ENCODE measurements at regions of chr17 and their contacts with region 1.

Region 1: DNA sequence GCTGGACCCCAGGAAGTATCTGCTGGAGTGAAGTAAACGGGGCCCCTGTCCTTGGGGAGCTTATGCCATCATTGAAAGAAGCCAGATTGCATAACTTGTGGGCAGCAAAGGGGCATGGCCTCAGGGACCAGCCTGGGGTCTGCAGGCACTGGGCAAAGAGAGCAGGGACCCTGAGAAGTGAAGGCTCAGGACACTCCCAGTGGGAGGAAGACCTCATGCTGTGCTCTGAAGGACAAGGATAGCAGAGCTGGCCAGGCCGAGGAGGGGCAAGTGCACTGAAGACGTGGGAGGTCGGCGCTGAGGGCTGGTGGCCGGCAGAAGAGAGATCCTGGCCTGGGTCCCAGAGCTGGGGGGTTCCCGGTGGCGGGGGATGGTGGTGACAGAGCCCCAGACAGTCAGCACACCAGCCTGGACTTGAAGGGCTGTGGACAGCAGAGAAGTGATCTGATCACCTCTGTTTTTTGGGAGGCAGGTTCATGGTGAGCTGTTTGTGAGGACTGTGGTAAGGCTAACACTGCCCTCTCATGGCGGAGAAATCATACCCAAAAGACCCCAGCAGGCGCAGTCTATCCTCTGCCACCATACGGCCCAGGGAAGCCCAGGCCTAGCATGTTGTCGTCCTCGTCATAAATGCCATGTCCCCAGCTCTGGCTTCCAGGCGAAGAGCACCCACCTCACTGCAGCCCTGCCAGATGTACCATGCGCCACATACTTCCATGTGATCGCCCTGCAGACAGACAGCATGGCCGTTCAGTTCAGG is 7.1 kb upstream of the CNP start:
- DNase-seq: peak; percentile 58 to 80 (median 69)
- ATAC-seq: peak; percentile 88
- H3K4me3 ChIP-seq: no peak overlapping the region
- H3K27ac ChIP-seq: peak overlapping the region; percentile 28; the same call in 1 of the 3 replicates
- H3K4me1 ChIP-seq: peaks cover 23 to 29% of the 10 kb centered on the region in 2 experiments
- H3K27me3 ChIP-seq: no peaks in the 10 kb centered on the region
- CTCF ChIP-seq: peak; percentile 79 to 88 (median 83)
- EP300 ChIP-seq: no peak
- POLR2A ChIP-seq: no peak
- RAD21 ChIP-seq: peak; percentile 65 to 86

Region 2: GRCh38 chr17:41588126-41588810 is 371.2 kb before region 1 on chr17:
- CTCF ChIA-PET with region 1: no interaction called
- POLR2A ChIA-PET with region 1: no interaction called
- in situ Hi-C with region 1: no loop called
- intact Hi-C with region 1: no loop called
- DNase-seq: no peak
- ATAC-seq: no peak
- H3K4me3 ChIP-seq: no peak overlapping the region
- H3K27ac ChIP-seq: no peak overlapping the region
- H3K4me1 ChIP-seq: no peaks in the 10 kb centered on the region; a peak in 2 of 5 replicates
- H3K27me3 ChIP-seq: peaks cover 32 to 81% of the 10 kb centered on the region in 2 experiments
- CTCF ChIP-seq: no peak
- EP300 ChIP-seq: no peak
- POLR2A ChIP-seq: no peak
- RAD21 ChIP-seq: no peak

Region 3: DNA sequence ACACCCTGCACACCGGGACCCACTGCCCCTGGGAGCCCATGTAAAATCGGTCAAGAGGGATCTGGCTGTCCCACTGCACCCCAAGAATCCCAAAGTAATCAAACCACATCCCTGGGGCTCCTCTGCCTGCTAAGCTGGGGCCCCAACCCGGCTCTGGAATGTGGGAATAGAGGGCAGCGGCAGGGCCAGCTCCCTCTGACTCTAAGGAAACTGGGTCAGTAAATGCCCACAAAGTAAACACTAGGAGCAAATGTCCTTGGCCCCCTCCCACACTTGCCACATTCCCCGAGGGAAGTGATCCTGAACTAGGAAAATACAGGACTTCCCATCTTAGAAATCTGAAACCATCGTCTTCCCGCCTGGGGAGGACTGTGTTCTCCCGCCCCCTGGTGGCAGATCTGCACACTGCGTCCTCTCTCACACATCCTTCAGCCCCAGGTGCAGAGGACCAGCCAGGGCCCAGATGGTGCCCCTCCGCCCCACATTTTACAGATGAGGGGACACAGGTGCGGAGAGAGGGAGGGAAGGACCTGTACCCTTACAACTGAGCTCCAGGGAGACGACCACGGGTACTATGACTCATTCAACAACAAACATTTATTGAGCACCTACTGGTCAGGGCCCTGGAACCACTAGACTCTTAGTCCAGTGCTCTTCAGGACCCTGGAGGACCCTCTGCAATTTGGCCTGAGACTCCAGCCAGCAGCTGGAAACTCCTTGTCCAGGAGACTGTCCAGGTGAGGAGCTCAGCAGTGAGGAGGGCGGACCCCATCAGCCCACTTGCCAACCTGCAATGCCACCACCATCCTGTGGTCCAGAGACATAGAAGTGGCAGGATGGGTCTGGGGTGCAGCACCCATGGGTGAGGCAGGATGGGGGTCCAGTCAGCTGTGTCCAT is 157.9 kb before region 1 on chr17:
- CTCF ChIA-PET with region 1: no interaction called
- POLR2A ChIA-PET with region 1: no interaction called
- in situ Hi-C with region 1: no loop called
- intact Hi-C with region 1: loop called (anchors 2 kb)
- DNase-seq: peak; percentile 79 to 86 (median 80)
- ATAC-seq: peak; percentile 87
- H3K4me3 ChIP-seq: no peak overlapping the region
- H3K27ac ChIP-seq: no peak overlapping the region
- H3K4me1 ChIP-seq: peaks cover 9 to 29% of the 10 kb centered on the region in 2 experiments
- H3K27me3 ChIP-seq: no peaks in the 10 kb centered on the region
- CTCF ChIP-seq: peak; percentile 92 to 97 (median 93)
- EP300 ChIP-seq: no peak
- POLR2A ChIP-seq: no peak
- RAD21 ChIP-seq: peak; percentile 92 to 99

Region 4: GRCh38 chr17:41918314-41919164 is 41.0 kb before region 1 on chr17 and contains the start of gene ACLY:
- CTCF ChIA-PET with region 1: no interaction called
- POLR2A ChIA-PET with region 1: interaction called, 7 read pairs
- in situ Hi-C with region 1: no loop called
- intact Hi-C with region 1: loop called (anchors 5 kb)
- DNase-seq: peak; percentile 99
- ATAC-seq: peak; percentile 97
- H3K4me3 ChIP-seq: peak within 1 kb of the TSS; percentile 61
- H3K27ac ChIP-seq: peak within 1 kb of the TSS; percentile 73
- H3K4me1 ChIP-seq: peaks cover 41 to 43% of the 10 kb centered on the region in 2 experiments
- H3K27me3 ChIP-seq: no peaks in the 10 kb centered on the region
- CTCF ChIP-seq: 0 out of 6 replicates have a peak, but pooled peaks of 1 of the 3 experiments have one; percentile 0
- EP300 ChIP-seq: no peak
- POLR2A ChIP-seq: peak; percentile 90
- RAD21 ChIP-seq: no peak
- polyA plus RNA-seq, gene ACLY: 42.9 to 58.5 TPM

Region 5: DNA sequence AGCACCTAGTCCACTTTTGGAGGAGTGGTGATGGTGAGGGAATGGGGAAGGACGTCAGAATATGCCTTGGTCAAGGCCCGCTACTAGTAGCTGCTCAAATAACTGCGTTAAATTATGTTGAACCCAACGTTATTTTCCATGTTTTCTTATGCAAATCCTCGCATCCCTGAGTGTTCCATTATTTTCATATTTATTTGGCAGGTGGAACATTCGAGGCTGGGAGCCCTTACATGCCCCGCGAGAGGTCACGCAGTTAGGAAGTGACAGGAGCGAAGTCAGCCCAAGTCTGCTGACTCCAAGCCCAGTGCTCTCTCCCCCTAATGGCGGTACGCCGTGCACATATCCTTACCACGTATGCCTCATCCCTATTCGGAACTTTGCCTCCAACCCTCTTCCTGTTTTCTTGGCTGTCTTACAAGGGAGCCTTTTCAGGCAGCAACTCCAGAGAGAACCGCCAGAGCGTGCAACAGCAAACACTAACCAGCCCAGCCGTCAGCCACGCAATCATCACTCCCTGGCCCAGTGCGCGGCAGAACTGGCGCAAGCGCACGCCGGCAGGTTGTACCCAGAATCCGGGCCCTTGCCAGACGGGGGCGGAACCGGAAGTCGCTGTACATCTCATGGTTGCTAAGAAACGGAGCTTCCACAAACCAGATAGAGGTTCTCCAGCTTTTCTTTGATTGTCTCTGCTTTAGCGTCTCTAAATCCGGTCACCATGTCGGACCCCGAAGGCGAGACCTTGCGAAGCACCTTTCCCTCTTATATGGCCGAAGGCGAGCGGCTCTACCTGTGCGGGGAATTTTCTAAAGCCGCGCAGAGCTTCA is 29.3 kb before region 1 on chr17 and contains the start of gene ODAD4:
- CTCF ChIA-PET with region 1: interaction called, 9 read pairs
- POLR2A ChIA-PET with region 1: interaction called, 9 read pairs
- in situ Hi-C with region 1: no loop called
- intact Hi-C with region 1: loop called (anchors 2 kb)
- DNase-seq: peak; percentile 92 to 97 (median 95)
- ATAC-seq: peak; percentile 99
- H3K4me3 ChIP-seq: peak within 1 kb of the TSS; percentile 45
- H3K27ac ChIP-seq: peak within 1 kb of the TSS; percentile 82
- H3K4me1 ChIP-seq: peaks cover 19 to 21% of the 10 kb centered on the region in 2 experiments; a peak in 4 of 5 replicates
- H3K27me3 ChIP-seq: no peaks in the 10 kb centered on the region
- CTCF ChIP-seq: peak; percentile 65 to 72 (median 69)
- EP300 ChIP-seq: no peak
- POLR2A ChIP-seq: peak; percentile 92
- RAD21 ChIP-seq: peak; percentile 34 to 61
- polyA plus RNA-seq, gene ODAD4: 0.30 to 0.81 TPM